Naive thymus-derived CD4-positive, alpha-beta T cell (primary cell): ENCODE measurements at regions of chr1 and their contacts with region 1.

Region 1: DNA sequence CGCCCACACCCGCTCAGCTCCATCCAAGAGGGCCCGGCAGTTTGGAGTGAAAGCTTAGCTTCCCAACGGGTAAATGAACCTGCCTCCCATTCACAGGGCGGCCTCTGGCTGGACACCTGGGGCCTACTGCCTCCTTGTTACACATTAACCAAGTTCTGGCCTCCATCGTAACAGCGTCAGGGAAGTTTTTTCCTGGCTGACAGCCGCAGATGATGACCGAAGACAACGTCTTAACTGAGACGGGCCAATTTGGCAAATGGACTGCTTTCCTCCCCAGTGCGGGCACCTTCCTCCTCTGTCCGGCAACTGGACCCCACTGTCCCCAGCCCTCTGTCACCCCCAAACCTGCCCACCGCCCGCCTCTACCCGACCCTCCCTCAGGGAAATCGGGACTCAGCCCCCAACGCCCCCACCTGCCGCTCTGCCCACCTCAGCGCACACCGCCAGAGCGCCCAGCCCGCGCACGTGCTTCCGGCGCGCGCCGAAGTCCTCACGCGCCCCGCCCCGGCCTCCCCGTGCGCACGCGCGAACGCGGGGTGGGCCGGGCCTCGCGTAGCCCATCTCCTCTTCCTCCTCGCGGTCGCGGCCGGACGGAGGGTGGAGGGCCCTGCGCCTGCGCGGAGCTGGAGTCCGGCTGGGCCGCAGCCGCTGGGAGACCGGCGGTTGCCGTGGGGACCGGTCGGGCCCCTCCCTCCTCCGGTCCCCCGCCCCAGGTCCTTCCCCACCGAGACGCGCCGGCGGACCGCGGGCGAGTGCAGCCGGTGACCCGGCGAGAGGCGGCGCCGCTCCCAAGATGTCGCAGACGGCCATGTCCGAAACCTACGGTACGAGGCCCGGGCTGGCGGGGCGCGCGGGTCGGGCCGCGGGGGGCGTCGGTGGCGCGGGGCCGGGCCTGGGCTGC is at the start of gene RAB4A:
- DNase-seq: peak; percentile 48 to 85 (median 75)
- ATAC-seq: peak; percentile 94
- H3K4me3 ChIP-seq: peak within 1 kb of the TSS; percentile 77
- H3K4me3 Mint-ChIP-seq: peak within 1 kb of the TSS; percentile 89 to 99 (median 94)
- H3K27ac ChIP-seq: peak within 1 kb of the TSS; percentile 62
- H3K27ac Mint-ChIP-seq: peak within 1 kb of the TSS; percentile 76 to 95 (median 89)
- H3K4me1 ChIP-seq: peaks cover 13 to 17% of the 10 kb centered on the region in 2 donors
- H3K4me1 Mint-ChIP-seq: peaks cover 25 to 45% (median 35%) of the 10 kb centered on the region in 7 donors
- H3K27me3 ChIP-seq: no peaks in the 10 kb centered on the region
- H3K27me3 Mint-ChIP-seq: no peaks in the 10 kb centered on the region
- total RNA-seq, gene RAB4A: 24.0 to 47.9 (median 36.9) TPM

Region 2: DNA sequence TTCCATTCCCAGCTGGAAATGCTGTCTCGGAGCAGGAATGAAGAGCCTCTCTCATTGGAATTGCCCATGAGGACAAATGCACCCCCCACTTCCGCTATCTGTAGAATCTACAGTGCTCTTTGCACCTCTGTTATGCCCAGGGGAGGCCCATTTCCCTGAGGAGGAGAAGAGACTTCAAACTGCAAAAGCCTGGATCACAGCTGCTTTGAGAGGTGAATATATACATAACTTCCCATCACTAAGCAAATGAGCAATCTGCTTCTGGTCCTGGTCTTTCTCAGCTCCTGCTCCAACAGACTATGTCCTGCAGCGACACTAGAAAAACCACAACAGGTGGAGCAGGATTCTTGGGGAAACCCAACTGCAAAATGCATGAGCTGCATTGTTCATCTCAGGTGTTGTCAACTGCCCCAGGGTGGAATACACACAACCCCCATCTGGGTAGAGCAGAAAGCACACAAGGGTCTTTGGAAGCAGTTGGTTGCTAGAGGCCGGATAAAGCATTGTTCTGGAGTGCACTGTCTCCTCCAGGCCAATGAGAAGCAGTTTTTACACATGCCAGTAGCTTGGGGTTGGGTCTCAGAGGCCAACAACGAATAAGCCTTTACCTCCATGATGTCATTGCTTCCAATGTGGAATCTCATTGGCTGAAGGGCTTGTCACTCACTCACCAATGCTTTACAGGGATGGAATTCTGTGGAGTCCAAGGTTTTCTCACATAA is 67.6 kb before region 1 on chr1:
- CTCF ChIA-PET with region 1: no interaction called
- POLR2A ChIA-PET with region 1: no interaction called
- intact Hi-C with region 1: no loop called
- DNase-seq: no peak
- ATAC-seq: no peak
- H3K4me3 ChIP-seq: no peak overlapping the region
- H3K4me3 Mint-ChIP-seq: no peak overlapping the region
- H3K27ac ChIP-seq: no peak overlapping the region
- H3K27ac Mint-ChIP-seq: peak overlapping the region in 1 of 9 donors; percentile 46
- H3K4me1 ChIP-seq: peaks cover 11 to 25% of the 10 kb centered on the region in 2 donors
- H3K4me1 Mint-ChIP-seq: peaks cover 12 to 72% (median 37%) of the 10 kb centered on the region in 7 donors
- H3K27me3 ChIP-seq: no peaks in the 10 kb centered on the region
- H3K27me3 Mint-ChIP-seq: peaks cover 0 to 17% (median 0%) of the 10 kb centered on the region in 5 donors

Region 3: DNA sequence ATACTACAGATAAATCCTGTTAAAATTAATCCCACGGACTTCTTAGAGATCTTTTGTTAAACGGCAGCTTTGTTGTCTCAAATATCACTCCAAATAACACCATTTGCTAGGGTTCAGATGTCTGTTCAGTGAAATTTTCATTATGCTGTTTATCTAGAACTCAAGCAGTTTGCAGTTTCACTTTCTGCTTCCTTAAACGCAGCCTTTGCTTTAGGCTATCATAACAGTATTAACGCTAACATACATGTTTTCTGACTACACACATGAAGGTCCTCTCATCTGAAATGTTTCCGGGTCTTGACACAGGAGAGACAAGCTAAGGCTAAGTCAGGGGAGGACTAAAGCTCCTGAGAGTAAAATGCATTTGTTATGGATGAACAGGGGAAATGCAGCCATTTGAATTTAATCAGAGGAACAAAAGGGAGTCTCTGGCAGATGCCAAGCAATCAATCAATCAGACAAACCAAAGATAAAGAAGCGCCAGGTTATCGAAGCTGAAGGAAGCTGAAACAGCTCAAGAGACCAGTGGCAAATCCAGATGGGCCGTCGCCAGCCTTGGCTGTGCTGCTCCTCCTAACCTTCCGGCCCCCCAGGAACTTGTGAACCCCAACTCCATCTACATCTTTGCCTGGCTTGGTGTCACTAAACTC is 55.2 kb after region 1 on chr1:
- CTCF ChIA-PET with region 1: no interaction called
- POLR2A ChIA-PET with region 1: no interaction called
- intact Hi-C with region 1: loop called in 1 of 2 experiments (anchors 1 kb)
- DNase-seq: peak in 4 of 9 donors; percentile 7 to 30 (median 10)
- ATAC-seq: no peak
- H3K4me3 ChIP-seq: no peak overlapping the region
- H3K4me3 Mint-ChIP-seq: peak overlapping the region in 8 of 10 donors; percentile 51 to 81 (median 75)
- H3K27ac ChIP-seq: peak overlapping the region; percentile 29
- H3K27ac Mint-ChIP-seq: peak overlapping the region in 8 of 9 donors; percentile 64 to 96 (median 92)
- H3K4me1 ChIP-seq: no peaks in the 10 kb centered on the region
- H3K4me1 Mint-ChIP-seq: peaks cover 0 to 38% (median 16%) of the 10 kb centered on the region in 7 donors
- H3K27me3 ChIP-seq: no peaks in the 10 kb centered on the region
- H3K27me3 Mint-ChIP-seq: no peaks in the 10 kb centered on the region

Region 4: GRCh38 chr1:229507951-229508822 is 237.4 kb after region 1 on chr1 and contains the start of gene NUP133:
- CTCF ChIA-PET with region 1: no interaction called
- POLR2A ChIA-PET with region 1: no interaction called
- intact Hi-C with region 1: loop called (anchors 1 kb)
- DNase-seq: peak; percentile 93 to 97 (median 97)
- ATAC-seq: peak; percentile 98
- H3K4me3 ChIP-seq: peak within 1 kb of the TSS; percentile 91
- H3K4me3 Mint-ChIP-seq: peak within 1 kb of the TSS; percentile 90 to 98 (median 92)
- H3K27ac ChIP-seq: peak within 1 kb of the TSS; percentile 95
- H3K27ac Mint-ChIP-seq: peak within 1 kb of the TSS; percentile 95 to 99 (median 99)
- H3K4me1 ChIP-seq: peaks cover 4 to 13% of the 10 kb centered on the region in 2 donors
- H3K4me1 Mint-ChIP-seq: peaks cover 10 to 47% (median 38%) of the 10 kb centered on the region in 7 donors
- H3K27me3 ChIP-seq: no peaks in the 10 kb centered on the region
- H3K27me3 Mint-ChIP-seq: peaks cover 0 to 5% (median 2%) of the 10 kb centered on the region in 5 donors
- total RNA-seq, gene NUP133: 24.3 to 45.8 (median 40.4) TPM

Region 5: GRCh38 chr1:229625915-229626831 is 355.4 kb after region 1 on chr1 and contains the starts of genes TAF5L and URB2:
- CTCF ChIA-PET with region 1: no interaction called
- POLR2A ChIA-PET with region 1: no interaction called
- intact Hi-C with region 1: loop called (anchors 5 kb)
- DNase-seq: peak; percentile 81 to 91 (median 85)
- ATAC-seq: peak; percentile 97
- H3K4me3 ChIP-seq: peak within 1 kb of the TSS; percentile 93
- H3K4me3 Mint-ChIP-seq: peak within 1 kb of the TSS; percentile 94 to 100 (median 98)
- H3K27ac ChIP-seq: peak within 1 kb of the TSS; percentile 80
- H3K27ac Mint-ChIP-seq: peak within 1 kb of the TSS; percentile 93 to 98 (median 97)
- H3K4me1 ChIP-seq: peaks cover 21 to 27% of the 10 kb centered on the region in 2 donors
- H3K4me1 Mint-ChIP-seq: peaks cover 39 to 69% (median 59%) of the 10 kb centered on the region in 7 donors
- H3K27me3 ChIP-seq: no peaks in the 10 kb centered on the region
- H3K27me3 Mint-ChIP-seq: no peaks in the 10 kb centered on the region
- total RNA-seq, gene TAF5L: 17.3 to 27.2 (median 19.8) TPM
- total RNA-seq, gene URB2: 6.2 to 18.2 (median 11.0) TPM